Activated T-helper 1 cell treated with anti-CD3 and anti-CD28 coated beads, Interleukin-12 subunit alpha, Interleukin-12 subunit beta, Interleukin-2, Interleukin-4 antibody, amounts not matched to agents 30 ng/mL and 10 ng/mL and 1 ng/mL, durations not matched to agents 14 hours and 24 hours and 36 hours (primary cell): ENCODE measurements at regions of chr11 and their contacts with region 1.

Region 1: GRCh38 chr11:113305440-113306336 is 8.7 kb upstream of the TTC12 start:
- DNase-seq: peak; percentile 51
- H3K4me3 Mint-ChIP-seq: no peak overlapping the region
- H3K27ac Mint-ChIP-seq: no peak overlapping the region
- H3K4me1 Mint-ChIP-seq: no peaks in the 10 kb centered on the region
- H3K27me3 Mint-ChIP-seq: peaks cover 16% of the 10 kb centered on the region

Region 2: GRCh38 chr11:113392236-113392921 is 86.7 kb after region 1 on chr11:
- intact Hi-C with region 1: no loop called
- DNase-seq: no peak
- H3K4me3 Mint-ChIP-seq: no peak overlapping the region
- H3K27ac Mint-ChIP-seq: no peak overlapping the region
- H3K4me1 Mint-ChIP-seq: no peaks in the 10 kb centered on the region
- H3K27me3 Mint-ChIP-seq: no peaks in the 10 kb centered on the region

Region 3: DNA sequence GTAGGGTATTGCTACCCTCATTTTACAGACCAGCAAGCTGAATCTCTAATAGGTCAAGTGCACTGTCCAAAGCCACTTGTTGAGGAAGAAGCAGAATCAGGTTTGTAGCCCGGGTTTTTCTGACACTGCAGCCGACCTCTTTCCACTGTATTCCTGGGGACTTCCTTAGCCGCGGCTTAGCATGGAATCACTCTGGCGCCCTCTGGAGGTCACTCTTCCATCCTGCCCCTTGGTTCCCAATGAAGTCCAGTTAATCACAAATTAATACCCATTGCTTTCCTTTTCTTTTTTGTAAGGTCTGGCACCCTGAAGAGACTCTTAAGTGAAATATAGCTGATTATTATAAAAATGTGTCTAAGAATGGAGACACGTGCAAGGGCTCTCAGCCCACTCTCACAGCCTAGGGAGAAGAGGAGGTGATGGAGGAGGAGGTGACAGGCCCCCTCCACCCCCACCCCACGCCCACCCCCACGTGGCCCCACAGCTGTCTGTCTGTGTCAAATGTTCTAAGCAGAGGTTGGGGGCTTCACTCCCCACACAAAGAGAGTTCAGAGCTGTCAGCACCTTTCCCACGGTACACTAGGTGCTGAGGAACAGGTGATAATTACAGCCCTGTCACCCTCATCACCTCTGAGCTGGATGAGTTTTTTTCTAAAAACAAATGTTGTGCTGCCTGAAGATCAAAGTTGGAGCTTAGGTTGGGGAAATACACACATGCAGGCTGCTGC is 227.2 kb after region 1 on chr11:
- intact Hi-C with region 1: loop called (anchors 1 kb)
- DNase-seq: peak; percentile 10
- H3K4me3 Mint-ChIP-seq: no peak overlapping the region
- H3K27ac Mint-ChIP-seq: no peak overlapping the region
- H3K4me1 Mint-ChIP-seq: no peaks in the 10 kb centered on the region
- H3K27me3 Mint-ChIP-seq: peaks cover 30% of the 10 kb centered on the region

Region 4: GRCh38 chr11:113579292-113579940 is 273.7 kb after region 1 on chr11:
- intact Hi-C with region 1: no loop called
- DNase-seq: no peak
- H3K4me3 Mint-ChIP-seq: no peak overlapping the region
- H3K27ac Mint-ChIP-seq: no peak overlapping the region
- H3K4me1 Mint-ChIP-seq: peaks cover 10% of the 10 kb centered on the region
- H3K27me3 Mint-ChIP-seq: no peaks in the 10 kb centered on the region

Region 5: DNA sequence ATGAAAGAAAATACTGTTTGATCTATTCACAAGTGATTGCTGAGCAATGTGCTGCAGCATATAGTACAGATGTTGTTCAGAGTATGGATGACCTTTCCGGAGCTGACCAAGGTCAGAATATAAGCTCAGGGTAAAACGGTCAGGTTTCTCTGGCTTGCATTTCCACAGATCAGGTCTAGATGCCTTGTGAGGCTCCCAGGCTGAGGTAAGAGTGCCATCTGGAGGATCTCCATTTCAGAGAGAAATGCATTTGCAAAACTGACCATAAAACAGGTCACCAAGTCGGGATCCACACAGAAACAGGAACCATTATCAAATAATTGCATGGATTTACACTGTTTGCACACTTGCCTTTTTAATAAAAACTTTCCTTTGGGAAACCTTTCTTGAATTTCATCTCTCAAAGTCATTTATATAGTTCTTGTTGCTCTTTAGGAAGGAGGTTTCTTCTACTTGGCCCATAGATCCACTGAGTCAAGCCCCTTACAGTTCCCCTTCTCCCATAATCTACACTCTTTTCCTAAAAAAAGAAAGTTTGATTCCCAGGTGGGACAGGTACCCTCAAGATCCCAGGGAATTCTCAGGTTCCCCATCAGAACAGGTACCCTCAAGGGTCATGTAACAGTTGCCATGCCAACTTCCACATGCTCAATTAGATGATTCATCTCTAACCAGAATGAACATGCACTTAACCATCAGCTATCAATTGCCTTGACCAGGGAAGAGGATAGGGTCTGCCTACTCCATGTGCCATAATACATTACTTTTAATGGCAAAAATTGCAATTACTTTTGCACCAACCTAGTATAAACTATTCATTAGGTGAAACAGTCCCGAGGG is 425.4 kb after region 1 on chr11:
- intact Hi-C with region 1: loop called (anchors 1 kb)
- DNase-seq: no peak
- H3K4me3 Mint-ChIP-seq: no peak overlapping the region
- H3K27ac Mint-ChIP-seq: no peak overlapping the region
- H3K4me1 Mint-ChIP-seq: peaks cover under 1% of the 10 kb centered on the region
- H3K27me3 Mint-ChIP-seq: no peaks in the 10 kb centered on the region

Region 6: GRCh38 chr11:113796663-113797259 is 491.1 kb after region 1 on chr11:
- intact Hi-C with region 1: loop called (anchors 1 kb)
- DNase-seq: no peak
- H3K4me3 Mint-ChIP-seq: no peak overlapping the region
- H3K27ac Mint-ChIP-seq: no peak overlapping the region
- H3K4me1 Mint-ChIP-seq: no peaks in the 10 kb centered on the region
- H3K27me3 Mint-ChIP-seq: peaks cover 2% of the 10 kb centered on the region